Calu3 (cell line): ENCODE measurements at regions of chr15 and their contacts with region 1.

Region 1: GRCh38 chr15:59294568-59295260 is 78.0 kb downstream of the MYO1E start:
- DNase-seq: no peak
- H3K4me3 Mint-ChIP-seq: no peak overlapping the region
- H3K27ac Mint-ChIP-seq: peak overlapping the region; percentile 57
- H3K4me1 Mint-ChIP-seq: peaks cover 80% of the 10 kb centered on the region
- H3K27me3 Mint-ChIP-seq: no peaks in the 10 kb centered on the region
- CTCF ChIP-seq: no peak

Region 2: DNA sequence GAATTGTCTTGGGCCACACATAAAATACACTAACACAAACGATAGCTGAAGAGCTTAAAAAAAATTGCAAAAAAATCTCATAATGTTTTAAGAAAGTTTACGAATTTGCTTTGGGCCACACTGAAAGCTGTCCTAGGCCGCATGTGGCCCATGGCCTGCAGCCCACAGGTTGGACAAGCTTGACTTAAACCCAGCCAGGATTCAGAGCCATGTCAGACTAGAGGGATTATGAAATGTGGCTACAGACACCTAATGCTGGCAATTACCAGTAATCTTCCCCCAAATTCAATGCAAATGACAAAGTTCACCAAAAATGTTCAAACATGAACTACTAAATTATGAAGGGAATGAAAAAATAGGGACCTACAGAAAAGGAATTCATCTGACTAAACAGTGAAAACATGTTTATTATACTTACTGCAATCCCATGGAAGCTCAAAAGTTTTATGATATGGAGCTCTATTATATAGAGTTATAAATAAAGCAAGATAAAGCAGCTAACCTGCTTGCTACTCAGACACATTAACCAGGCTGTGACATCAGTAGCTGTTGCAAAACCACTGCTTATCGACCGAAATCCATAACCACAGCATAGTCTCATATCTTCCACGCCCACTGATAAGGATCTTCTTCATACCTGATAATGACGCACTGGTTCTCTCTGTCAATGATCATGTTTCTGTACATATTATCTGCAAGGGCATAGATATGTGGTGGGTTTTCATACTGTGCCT is 38.9 kb before region 1 on chr15:
- CTCF ChIA-PET with region 1: interaction called, 5 read pairs
- intact Hi-C with region 1: loop called (anchors 5 kb)
- DNase-seq: peak; percentile 86
- H3K4me3 Mint-ChIP-seq: peak overlapping the region; percentile 42
- H3K27ac Mint-ChIP-seq: peak overlapping the region; percentile 98
- H3K4me1 Mint-ChIP-seq: peaks cover 65% of the 10 kb centered on the region
- H3K27me3 Mint-ChIP-seq: no peaks in the 10 kb centered on the region
- CTCF ChIP-seq: no peak

Region 3: GRCh38 chr15:59268168-59268979 is 26.3 kb before region 1 on chr15:
- CTCF ChIA-PET with region 1: interaction called, 11 read pairs
- intact Hi-C with region 1: no loop called
- DNase-seq: no peak
- H3K4me3 Mint-ChIP-seq: peak overlapping the region; percentile 37
- H3K27ac Mint-ChIP-seq: peak overlapping the region; percentile 90
- H3K4me1 Mint-ChIP-seq: peaks cover 65% of the 10 kb centered on the region
- H3K27me3 Mint-ChIP-seq: no peaks in the 10 kb centered on the region
- CTCF ChIP-seq: no peak

Region 4: DNA sequence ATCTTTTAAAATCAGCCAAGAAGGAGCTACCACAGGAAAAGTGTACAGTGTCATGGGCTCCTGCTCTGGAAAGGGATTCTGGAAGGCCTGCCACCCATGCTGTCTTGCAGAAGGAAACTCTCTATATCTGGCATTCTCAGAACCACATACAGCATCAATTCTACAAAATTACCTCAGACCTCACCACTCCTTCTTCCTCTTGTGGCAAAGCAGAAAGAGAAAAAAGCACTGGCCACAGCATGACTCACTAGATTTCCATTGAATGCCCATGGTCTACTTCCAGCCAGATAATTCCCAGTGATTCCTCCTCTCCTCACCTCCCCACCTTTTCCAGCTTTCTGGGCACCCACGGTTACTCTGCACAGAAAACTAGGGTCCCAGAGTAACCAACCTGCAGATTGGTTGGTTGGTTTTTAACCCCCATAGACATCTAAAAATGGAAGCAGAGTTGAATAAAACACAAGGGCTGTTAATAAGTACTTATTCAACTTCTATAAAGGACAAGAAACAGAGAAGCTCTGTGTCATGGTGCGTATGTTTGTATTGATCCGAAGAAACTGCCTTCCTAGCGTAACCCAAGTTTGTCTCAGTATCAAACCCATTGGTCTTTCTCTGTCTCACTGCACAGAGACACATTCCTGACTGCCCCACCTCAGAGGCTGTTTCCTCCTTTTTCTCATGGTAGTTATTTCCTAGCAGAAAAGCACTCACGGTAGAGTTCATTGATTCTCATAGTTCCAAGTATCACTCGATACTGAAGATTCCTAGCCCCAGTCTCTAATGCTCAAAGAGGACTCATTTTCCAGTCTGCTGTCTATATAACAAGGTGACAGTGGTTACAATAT is 20.4 kb before region 1 on chr15:
- CTCF ChIA-PET with region 1: interaction called, 13 read pairs
- intact Hi-C with region 1: loop called (anchors 1 kb)
- DNase-seq: peak; percentile 77
- H3K4me3 Mint-ChIP-seq: peak overlapping the region; percentile 60
- H3K27ac Mint-ChIP-seq: peak overlapping the region; percentile 100
- H3K4me1 Mint-ChIP-seq: peaks cover 86% of the 10 kb centered on the region
- H3K27me3 Mint-ChIP-seq: no peaks in the 10 kb centered on the region
- CTCF ChIP-seq: no peak